ENCODE measurements at regions of chr2 and their contacts with region 1.

Region 1: DNA sequence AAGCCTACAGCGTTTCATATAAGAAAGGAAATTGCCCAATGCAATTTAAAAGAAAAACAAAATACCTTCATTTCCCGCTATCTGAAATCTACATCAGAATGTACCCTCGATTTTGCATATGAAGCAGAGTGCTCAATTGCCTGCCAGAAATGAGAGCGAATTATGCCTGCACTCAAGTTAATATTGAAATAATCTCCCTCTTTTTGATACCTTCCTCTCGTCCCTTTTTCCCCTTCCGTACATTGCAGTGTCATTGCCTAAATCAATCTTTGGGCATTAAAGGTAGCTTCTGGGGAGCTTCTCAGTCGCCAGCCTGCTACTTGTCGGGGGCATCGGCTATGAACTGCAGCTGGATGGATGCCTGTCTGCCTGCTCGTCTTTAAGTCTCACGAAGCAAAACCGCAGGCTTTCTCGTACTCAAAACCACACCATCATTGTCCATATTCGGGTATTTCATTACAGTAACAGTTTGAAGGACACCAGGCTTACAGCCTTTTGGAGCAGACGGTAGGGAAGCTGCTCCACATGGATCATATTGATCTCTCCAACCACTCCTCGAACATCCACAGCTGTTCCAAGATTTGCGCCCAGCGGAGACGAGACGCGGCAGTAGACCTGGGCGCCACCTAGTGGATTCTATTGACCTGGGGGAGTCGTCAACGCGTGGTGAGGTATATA is 64.0 kb upstream of the HNRNPA3 start:
- DNase-seq: peak; percentile 85
- H3K4me3 Mint-ChIP-seq: peak overlapping the region; percentile 82
- H3K27ac Mint-ChIP-seq: no peak overlapping the region
- H3K4me1 Mint-ChIP-seq: peaks cover 10% of the 10 kb centered on the region
- H3K27me3 Mint-ChIP-seq: peaks cover 22% of the 10 kb centered on the region

Region 2: DNA sequence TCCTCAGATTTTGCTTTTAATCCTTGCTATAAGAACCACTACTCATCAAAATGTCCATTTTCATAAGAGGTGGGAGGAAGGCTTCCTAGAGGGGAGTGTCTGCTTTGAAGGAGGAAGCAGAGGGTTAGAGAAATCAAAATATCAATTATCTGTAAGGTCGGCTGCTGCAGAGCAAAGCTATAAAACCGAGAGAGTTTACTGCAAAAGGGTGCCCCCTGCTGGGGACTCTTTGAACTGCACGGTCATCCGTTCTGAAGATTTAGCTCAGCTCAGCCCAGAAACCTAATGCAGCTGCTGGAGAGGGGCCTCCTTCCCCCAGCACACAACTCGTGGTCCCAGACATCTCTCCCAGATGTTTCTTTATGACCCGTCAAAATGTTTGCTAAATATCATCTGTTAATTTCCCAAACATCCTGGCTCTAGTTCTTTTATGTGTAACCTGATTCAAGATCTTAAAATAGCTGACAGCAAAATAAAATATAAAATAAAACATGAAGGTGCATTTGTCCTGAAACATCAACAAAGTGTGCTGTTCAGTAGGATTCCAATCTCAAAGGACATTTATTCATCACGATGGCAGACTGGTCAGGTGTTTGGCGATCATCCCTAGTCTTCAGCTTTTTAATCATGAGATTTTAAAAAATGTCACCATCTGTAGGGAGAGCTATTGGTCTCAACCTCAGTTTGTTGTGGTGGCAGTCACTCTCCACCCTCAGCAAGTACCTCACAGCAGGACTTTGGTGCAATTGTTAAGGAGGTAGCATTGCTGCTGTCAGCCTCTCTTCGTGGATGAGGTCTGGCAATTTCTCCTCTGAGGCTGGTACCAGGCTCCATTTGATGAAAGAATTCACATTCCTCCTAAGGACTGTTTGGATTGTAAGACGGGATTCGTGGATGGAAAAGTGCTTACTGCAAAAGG is 693.5 kb before region 1 on chr2:
- CTCF ChIA-PET with region 1: interaction called, 3 read pairs
- intact Hi-C with region 1: loop called (anchors 5 kb)
- DNase-seq: peak; percentile 92
- H3K4me3 Mint-ChIP-seq: no peak overlapping the region
- H3K27ac Mint-ChIP-seq: no peak overlapping the region
- H3K4me1 Mint-ChIP-seq: peaks cover 2% of the 10 kb centered on the region
- H3K27me3 Mint-ChIP-seq: peaks cover 37% of the 10 kb centered on the region

Region 3: DNA sequence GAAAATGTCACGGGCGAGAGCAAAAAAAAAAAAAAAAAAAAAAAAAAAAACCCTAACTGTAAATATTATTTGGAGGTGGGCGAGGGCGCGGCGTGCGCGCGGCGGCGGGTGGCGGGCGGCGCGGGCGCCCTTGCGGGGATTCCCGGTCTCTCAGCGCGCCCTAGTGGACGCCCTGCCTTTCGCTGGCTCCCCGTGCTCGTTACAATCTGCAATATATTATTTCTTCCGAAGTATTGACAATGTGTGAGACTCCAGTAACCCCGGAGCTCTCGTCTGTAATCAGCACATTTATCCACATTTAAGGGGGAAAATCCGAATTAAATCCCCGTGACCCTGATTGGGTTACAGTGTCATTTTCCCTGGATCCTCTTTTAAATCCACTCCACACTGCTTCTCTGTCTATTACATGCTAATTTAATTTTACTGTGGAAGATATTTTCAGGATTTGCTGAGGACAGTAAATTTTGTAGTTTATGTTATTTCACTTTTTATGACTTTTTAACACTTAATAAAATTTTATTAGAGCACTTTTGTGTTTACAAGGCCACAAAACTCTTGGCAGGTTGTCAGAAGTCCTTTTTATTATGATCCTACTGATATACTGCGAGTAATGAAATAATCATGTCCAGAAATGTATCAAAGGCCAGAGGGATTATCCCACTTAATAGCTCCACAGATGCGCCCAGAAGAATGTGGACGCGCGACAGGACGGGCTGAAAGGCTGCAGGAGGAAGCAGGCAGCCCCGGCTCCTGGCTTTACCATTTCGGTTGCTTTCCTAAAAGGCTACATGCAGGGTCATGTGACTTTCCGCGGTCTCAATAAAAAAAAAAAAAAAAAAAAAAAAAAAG is 510.2 kb before region 1 on chr2:
- CTCF ChIA-PET with region 1: interaction called, 3 read pairs
- intact Hi-C with region 1: loop called (anchors 5 kb)
- DNase-seq: peak; percentile 69
- H3K4me3 Mint-ChIP-seq: peak overlapping the region; percentile 62
- H3K27ac Mint-ChIP-seq: no peak overlapping the region
- H3K4me1 Mint-ChIP-seq: peaks cover 2% of the 10 kb centered on the region
- H3K27me3 Mint-ChIP-seq: peaks cover 52% of the 10 kb centered on the region

Region 4: DNA sequence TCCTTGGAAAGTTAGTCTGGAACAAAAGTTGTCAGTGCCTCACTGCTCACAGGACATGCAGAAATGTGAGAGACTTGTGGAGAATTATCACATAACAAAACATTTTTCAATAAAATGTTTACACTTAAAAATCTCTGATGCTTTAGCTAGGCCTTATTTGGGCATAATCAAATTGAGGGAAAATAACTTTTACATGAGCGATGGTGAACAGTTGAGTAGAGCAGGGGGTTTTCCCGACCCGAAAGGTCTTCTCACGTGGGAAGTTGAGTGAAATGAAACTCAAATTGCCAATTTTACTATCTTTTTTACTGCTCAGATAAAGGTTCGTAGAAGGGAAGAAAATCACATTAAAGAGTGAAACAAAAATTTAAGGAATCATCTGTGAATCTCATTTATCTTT is 413.7 kb before region 1 on chr2:
- CTCF ChIA-PET with region 1: no interaction called
- intact Hi-C with region 1: loop called (anchors 5 kb)
- DNase-seq: no peak
- H3K4me3 Mint-ChIP-seq: no peak overlapping the region
- H3K27ac Mint-ChIP-seq: no peak overlapping the region
- H3K4me1 Mint-ChIP-seq: no peaks in the 10 kb centered on the region
- H3K27me3 Mint-ChIP-seq: peaks cover 2% of the 10 kb centered on the region

Region 5: GRCh38 chr2:176931588-176932563 is 216.7 kb before region 1 on chr2:
- CTCF ChIA-PET with region 1: interaction called, 4 read pairs
- intact Hi-C with region 1: loop called (anchors 5 kb)
- DNase-seq: peak; percentile 23
- H3K4me3 Mint-ChIP-seq: no peak overlapping the region
- H3K27ac Mint-ChIP-seq: no peak overlapping the region
- H3K4me1 Mint-ChIP-seq: peaks cover 10% of the 10 kb centered on the region
- H3K27me3 Mint-ChIP-seq: peaks cover 8% of the 10 kb centered on the region

Region 6: DNA sequence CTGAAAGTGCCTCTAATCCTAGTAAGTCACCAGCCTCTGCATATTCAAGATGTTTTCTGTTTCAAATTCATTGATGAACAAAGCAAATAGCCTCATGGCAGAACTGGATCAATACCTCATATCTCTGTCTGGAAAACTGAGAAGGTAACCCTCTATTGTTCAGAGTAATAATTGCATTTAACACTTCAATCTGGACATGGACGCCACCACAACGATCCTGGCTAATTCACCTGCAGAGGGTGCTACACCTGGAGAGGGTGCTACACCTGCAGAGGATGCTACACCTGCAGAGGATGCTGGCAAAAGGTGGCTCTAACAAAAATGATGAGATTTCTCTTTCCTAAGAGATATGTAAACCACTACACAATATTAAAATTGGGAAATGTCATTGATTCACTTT is 119.1 kb before region 1 on chr2:
- CTCF ChIA-PET with region 1: no interaction called
- intact Hi-C with region 1: loop called (anchors 2 kb)
- DNase-seq: no peak
- H3K4me3 Mint-ChIP-seq: no peak overlapping the region
- H3K27ac Mint-ChIP-seq: no peak overlapping the region
- H3K4me1 Mint-ChIP-seq: no peaks in the 10 kb centered on the region
- H3K27me3 Mint-ChIP-seq: peaks cover 11% of the 10 kb centered on the region

Region 7: GRCh38 chr2:177118636-177119035 is 30.0 kb before region 1 on chr2:
- CTCF ChIA-PET with region 1: no interaction called
- intact Hi-C with region 1: no loop called
- DNase-seq: no peak
- H3K4me3 Mint-ChIP-seq: no peak overlapping the region
- H3K27ac Mint-ChIP-seq: no peak overlapping the region
- H3K4me1 Mint-ChIP-seq: no peaks in the 10 kb centered on the region
- H3K27me3 Mint-ChIP-seq: peaks cover 11% of the 10 kb centered on the region

Measured in activated naive CD4-positive, alpha-beta T cell treated with anti-CD3 and anti-CD28 coated beads for 36 hours (primary cell).